Pancreas (tissue), 10 donors: ENCODE measurements at regions of chr4 and their contacts with region 1.

Region 1: DNA sequence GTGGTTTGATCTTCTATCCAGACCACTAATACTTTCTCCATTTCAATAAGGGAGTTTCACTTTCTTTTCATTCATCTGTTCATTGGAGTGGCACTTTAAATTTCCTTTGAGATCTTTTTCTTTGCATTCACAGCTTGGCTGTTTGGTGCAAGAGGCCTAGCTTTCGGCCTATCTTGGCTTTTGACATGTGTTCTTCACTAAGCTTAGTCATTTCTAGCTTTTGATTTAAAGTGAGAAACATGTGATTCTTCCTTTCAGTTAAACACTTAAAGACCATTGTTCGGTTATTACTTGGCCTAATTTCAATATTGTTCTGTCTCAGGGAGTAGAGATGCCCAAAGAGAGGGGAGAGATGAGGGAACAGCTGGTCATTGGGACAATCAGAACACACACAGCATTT is 24.3 kb downstream of the CXCL13 start:
- DNase-seq: no peak
- ATAC-seq: no peak
- H3K4me3 ChIP-seq: no peak overlapping the region
- H3K27ac ChIP-seq: no peak overlapping the region
- H3K4me1 ChIP-seq: no peaks in the 10 kb centered on the region
- H3K27me3 ChIP-seq: no peaks in the 10 kb centered on the region
- CTCF ChIP-seq: no peak

Region 2: DNA sequence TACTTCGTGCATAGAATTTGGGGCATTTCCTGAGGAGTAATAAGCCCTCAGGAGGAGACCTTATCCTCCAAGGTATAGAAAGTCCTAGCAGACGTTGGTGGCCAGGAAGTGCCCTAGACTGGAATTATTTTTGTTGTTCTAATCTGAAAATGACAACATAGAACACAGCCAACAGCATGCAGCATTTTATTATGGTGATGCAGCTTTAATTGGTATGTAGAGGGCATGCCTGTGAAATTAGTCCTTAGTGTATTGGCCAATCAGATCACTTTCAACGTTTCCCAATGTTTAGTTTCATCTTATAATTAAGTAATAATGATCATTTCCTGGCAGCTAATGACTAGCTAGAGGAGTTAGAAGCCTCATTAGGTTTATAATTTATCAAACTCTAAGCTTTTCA is 995.6 kb before region 1 on chr4:
- intact Hi-C with region 1: no loop called
- DNase-seq: no peak
- ATAC-seq: peak in 2 of 4 donors; percentile 16 to 41
- H3K4me3 ChIP-seq: no peak overlapping the region
- H3K27ac ChIP-seq: no peak overlapping the region
- H3K4me1 ChIP-seq: no peaks in the 10 kb centered on the region
- H3K27me3 ChIP-seq: no peaks in the 10 kb centered on the region
- CTCF ChIP-seq: no peak

Region 3: GRCh38 chr4:77031544-77031943 is 598.3 kb before region 1 on chr4:
- intact Hi-C with region 1: no loop called
- DNase-seq: no peak
- ATAC-seq: no peak
- H3K4me3 ChIP-seq: no peak overlapping the region
- H3K27ac ChIP-seq: no peak overlapping the region
- H3K4me1 ChIP-seq: no peaks in the 10 kb centered on the region
- H3K27me3 ChIP-seq: no peaks in the 10 kb centered on the region
- CTCF ChIP-seq: no peak

Region 4: GRCh38 chr4:77697860-77698590 is 68.1 kb after region 1 on chr4:
- intact Hi-C with region 1: loop called in 1 of 3 experiments (anchors 10 kb)
- DNase-seq: peak in 4 of 6 donors; percentile 32 to 63 (median 58)
- ATAC-seq: peak; percentile 92 to 97 (median 96)
- H3K4me3 ChIP-seq: peak overlapping the region in 2 of 4 donors; percentile 10 to 19
- H3K27ac ChIP-seq: peak overlapping the region in 3 of 4 donors; percentile 35 to 70 (median 68)
- H3K4me1 ChIP-seq: peaks cover 0 to 3% (median 0%) of the 10 kb centered on the region in 3 donors
- H3K27me3 ChIP-seq: no peaks in the 10 kb centered on the region
- CTCF ChIP-seq: peak in 3 of 4 donors; percentile 36 to 47 (median 44)